ENCODE measurements at regions of chr2 and their contacts with region 1.

Region 1: GRCh38 chr2:47272031-47272864 is 117.1 kb upstream of the STPG4 start:
- DNase-seq: peak in 41 of 42 donors; percentile 30 to 87 (median 69)

Region 2: GRCh38 chr2:47046271-47046670 is 226.0 kb before region 1 on chr2:
- intact Hi-C with region 1: loop called (anchors 5 kb)
- DNase-seq: peak; percentile 79 to 97 (median 92)

Region 3: GRCh38 chr2:47179388-47179787 is 92.9 kb before region 1 on chr2:
- intact Hi-C with region 1: no loop called
- DNase-seq: no peak

Region 4: GRCh38 chr2:47309952-47310800 is 37.9 kb after region 1 on chr2:
- intact Hi-C with region 1: loop called (anchors 5 kb)
- DNase-seq: peak in 35 of 42 donors; percentile 19 to 84 (median 57)

Region 5: DNA sequence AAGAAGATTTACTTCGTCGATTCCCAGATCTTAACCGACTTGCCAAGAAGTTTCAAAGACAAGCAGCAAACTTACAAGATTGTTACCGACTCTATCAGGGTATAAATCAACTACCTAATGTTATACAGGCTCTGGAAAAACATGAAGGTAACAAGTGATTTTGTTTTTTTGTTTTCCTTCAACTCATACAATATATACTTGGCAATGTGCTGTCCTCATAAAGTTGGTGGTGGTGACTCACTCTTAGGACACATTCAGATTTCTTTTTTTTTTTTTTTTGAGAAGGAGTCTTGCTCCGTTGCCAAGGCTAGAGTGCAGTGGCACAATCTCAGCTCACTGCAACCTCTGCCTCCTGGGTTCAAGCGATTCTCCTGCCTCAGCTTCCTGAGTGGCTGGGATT is 157.5 kb after region 1 on chr2:
- intact Hi-C with region 1: no loop called
- DNase-seq: no peak

Region 6: DNA sequence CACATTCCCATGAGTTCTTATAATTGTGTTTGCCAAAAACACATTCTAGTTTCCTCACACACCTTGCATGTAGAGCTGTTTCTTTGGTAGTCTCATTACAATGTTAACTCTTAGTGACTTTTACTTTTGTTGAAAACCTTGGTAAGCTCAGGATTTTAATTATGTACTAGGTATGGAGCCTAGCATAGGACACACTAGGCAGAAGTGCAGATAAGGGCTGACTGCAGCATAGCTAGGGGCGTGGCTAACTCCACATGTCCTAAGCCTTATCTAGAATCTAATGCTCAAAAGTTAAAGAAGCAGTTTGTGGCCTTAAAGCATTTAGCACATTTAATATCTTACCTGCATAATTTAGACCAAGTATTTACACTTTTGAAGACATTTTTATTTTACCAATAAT is 787.7 kb after region 1 on chr2:
- intact Hi-C with region 1: no loop called
- DNase-seq: no peak

Region 7: GRCh38 chr2:48332286-48332685 is 1060.0 kb after region 1 on chr2:
- intact Hi-C with region 1: no loop called
- DNase-seq: no peak